ENCODE measurements at regions of chr12 and their contacts with region 1.

Region 1: DNA sequence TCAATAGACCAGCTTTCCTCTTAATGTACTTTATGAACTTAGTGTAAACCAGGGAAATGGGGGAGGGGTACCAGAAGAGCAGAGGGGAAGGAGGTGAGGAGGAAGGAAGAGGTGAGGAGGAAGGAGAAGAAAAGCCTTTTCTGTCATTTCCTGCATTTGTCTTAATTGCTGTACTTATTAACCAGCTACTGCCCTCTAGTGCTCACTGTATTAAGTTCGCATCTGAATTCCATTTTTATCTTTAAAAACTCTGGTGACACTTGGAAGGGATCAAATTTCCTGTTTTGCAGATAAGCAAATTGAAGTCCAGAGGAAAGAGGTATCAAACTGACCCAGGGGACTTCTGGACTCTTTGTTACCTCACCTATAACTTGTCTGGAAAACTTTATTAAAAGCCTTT is 22.2 kb downstream of the MANSC1 start:
- DNase-seq: no peak
- H3K4me3 ChIP-seq: no peak overlapping the region
- H3K27ac ChIP-seq: no peak overlapping the region
- H3K4me1 ChIP-seq: no peaks in the 10 kb centered on the region
- H3K27me3 ChIP-seq: no peaks in the 10 kb centered on the region
- CTCF ChIP-seq: peak; percentile 69 to 74

Region 2: GRCh38 chr12:12081836-12082497 is 245.8 kb before region 1 on chr12:
- intact Hi-C with region 1: loop called (anchors 5 kb)
- DNase-seq: no peak
- H3K4me3 ChIP-seq: no peak overlapping the region
- H3K27ac ChIP-seq: peak overlapping the region; percentile 51 to 54
- H3K4me1 ChIP-seq: peaks cover 0 to 3% (median 0%) of the 10 kb centered on the region in 4 donors
- H3K27me3 ChIP-seq: no peaks in the 10 kb centered on the region
- CTCF ChIP-seq: peak; percentile 30 to 48

Region 3: DNA sequence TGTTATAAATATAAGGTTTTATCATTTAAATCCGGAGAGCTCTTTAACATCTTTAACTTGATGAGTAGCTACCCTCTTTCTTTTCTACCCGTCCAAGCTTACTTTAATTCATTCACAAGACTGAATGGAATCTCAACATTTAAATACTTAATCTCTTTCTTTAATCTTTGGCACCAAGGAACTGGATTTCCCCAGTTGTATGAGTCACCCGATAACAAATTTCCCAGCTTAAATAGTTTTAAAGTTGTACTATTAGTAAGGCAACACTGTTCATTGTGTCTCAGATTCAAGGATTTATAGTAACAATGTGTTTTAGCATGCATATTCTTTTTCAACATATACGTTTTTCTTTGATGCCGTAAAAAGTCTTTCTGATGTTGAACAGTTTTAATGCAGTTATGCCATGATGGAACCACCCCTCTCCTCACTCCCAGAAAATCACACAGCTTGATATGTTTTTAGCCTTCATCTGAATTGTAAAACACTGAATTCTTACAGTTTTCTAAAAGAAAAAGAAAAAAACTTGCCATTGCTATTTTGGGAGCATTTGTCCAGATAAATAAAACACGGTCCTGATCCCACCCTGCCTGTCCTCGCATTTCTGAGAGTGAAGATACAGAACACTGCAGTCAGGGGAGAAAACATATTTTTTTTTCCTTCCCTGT is 44.9 kb before region 1 on chr12:
- intact Hi-C with region 1: no loop called
- DNase-seq: no peak
- H3K4me3 ChIP-seq: no peak overlapping the region
- H3K27ac ChIP-seq: no peak overlapping the region
- H3K4me1 ChIP-seq: peaks cover 0 to 19% (median 9%) of the 10 kb centered on the region in 4 donors
- H3K27me3 ChIP-seq: no peaks in the 10 kb centered on the region
- CTCF ChIP-seq: no peak